CD4-positive, alpha-beta T cell (primary cell): ENCODE measurements at regions of chr14 and their contacts with region 1.

Region 1: GRCh38 chr14:99982537-99983250 is 82.5 kb upstream of the EVL start:
- DNase-seq: peak; percentile 33 to 86 (median 60)
- ATAC-seq: peak; percentile 100
- H3K4me3 ChIP-seq: no peak overlapping the region
- H3K4me3 Mint-ChIP-seq: no peak overlapping the region
- H3K27ac ChIP-seq: no peak overlapping the region
- H3K27ac Mint-ChIP-seq: peak overlapping the region; percentile 34
- H3K4me1 ChIP-seq: peaks cover 3% of the 10 kb centered on the region
- H3K4me1 Mint-ChIP-seq: peaks cover 23% of the 10 kb centered on the region
- H3K27me3 ChIP-seq: no peaks in the 10 kb centered on the region
- H3K27me3 Mint-ChIP-seq: no peaks in the 10 kb centered on the region
- CTCF ChIP-seq: peak; percentile 95

Region 2: DNA sequence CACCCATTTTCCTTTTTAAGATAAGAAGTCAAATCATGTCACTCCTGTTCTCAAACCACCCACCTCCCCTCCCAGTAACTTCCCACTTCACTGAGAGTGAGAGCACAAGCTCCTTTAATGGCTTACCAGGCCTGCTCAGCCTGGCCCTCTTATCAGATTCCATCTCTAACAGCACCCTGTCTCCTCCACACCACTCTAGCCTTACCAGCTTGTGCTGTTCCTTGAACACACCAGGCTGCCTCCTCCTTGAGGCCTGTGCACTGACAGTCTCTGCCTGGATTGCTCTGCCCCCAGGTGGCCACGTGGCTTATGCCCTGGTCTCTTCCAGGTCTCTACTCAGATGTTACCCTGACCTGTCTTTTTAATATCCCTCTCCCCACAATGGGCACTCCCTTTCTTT is 42.4 kb after region 1 on chr14:
- CTCF ChIA-PET with region 1: interaction called, 3 read pairs
- POLR2A ChIA-PET with region 1: no interaction called
- intact Hi-C with region 1: loop called in 1 of 2 experiments (anchors 1 kb)
- DNase-seq: peak in 9 of 14 experiments; percentile 4 to 43 (median 17)
- ATAC-seq: peak; percentile 64
- H3K4me3 ChIP-seq: no peak overlapping the region
- H3K4me3 Mint-ChIP-seq: no peak overlapping the region
- H3K27ac ChIP-seq: no peak overlapping the region
- H3K27ac Mint-ChIP-seq: no peak overlapping the region
- H3K4me1 ChIP-seq: peaks cover 3% of the 10 kb centered on the region
- H3K4me1 Mint-ChIP-seq: peaks cover 6% of the 10 kb centered on the region
- H3K27me3 ChIP-seq: no peaks in the 10 kb centered on the region
- H3K27me3 Mint-ChIP-seq: no peaks in the 10 kb centered on the region
- CTCF ChIP-seq: no peak

Region 3: GRCh38 chr14:100056964-100057795 is 74.5 kb after region 1 on chr14:
- CTCF ChIA-PET with region 1: no interaction called
- POLR2A ChIA-PET with region 1: interaction called, 3 read pairs
- intact Hi-C with region 1: loop called in 1 of 2 experiments (anchors 5 kb)
- DNase-seq: peak in 4 of 14 experiments; percentile 48 to 85 (median 78)
- ATAC-seq: peak; percentile 80
- H3K4me3 ChIP-seq: no peak overlapping the region
- H3K4me3 Mint-ChIP-seq: peak overlapping the region; percentile 8
- H3K27ac ChIP-seq: peak overlapping the region in 1 of 2 donors; percentile 39
- H3K27ac Mint-ChIP-seq: peak overlapping the region; percentile 78
- H3K4me1 ChIP-seq: peaks cover 48% of the 10 kb centered on the region
- H3K4me1 Mint-ChIP-seq: peaks cover 51% of the 10 kb centered on the region
- H3K27me3 ChIP-seq: no peaks in the 10 kb centered on the region
- H3K27me3 Mint-ChIP-seq: no peaks in the 10 kb centered on the region
- CTCF ChIP-seq: peak; percentile 81

Region 4: GRCh38 chr14:100108042-100108825 is 125.5 kb after region 1 on chr14:
- CTCF ChIA-PET with region 1: interaction called, 18 read pairs
- POLR2A ChIA-PET with region 1: no interaction called
- intact Hi-C with region 1: loop called (anchors 1 to 2 kb)
- DNase-seq: peak; percentile 80 to 92 (median 86)
- ATAC-seq: peak; percentile 45
- H3K4me3 ChIP-seq: no peak overlapping the region
- H3K4me3 Mint-ChIP-seq: peak overlapping the region; percentile 69
- H3K27ac ChIP-seq: peak overlapping the region; percentile 49 to 85
- H3K27ac Mint-ChIP-seq: peak overlapping the region; percentile 98
- H3K4me1 ChIP-seq: peaks cover 87% of the 10 kb centered on the region
- H3K4me1 Mint-ChIP-seq: peaks cover 80% of the 10 kb centered on the region
- H3K27me3 ChIP-seq: no peaks in the 10 kb centered on the region
- H3K27me3 Mint-ChIP-seq: no peaks in the 10 kb centered on the region
- CTCF ChIP-seq: peak; percentile 93

Region 5: GRCh38 chr14:100246826-100247428 is 264.2 kb after region 1 on chr14:
- CTCF ChIA-PET with region 1: no interaction called
- POLR2A ChIA-PET with region 1: interaction called, 3 read pairs
- intact Hi-C with region 1: loop called in 1 of 2 experiments (anchors 5 kb)
- DNase-seq: peak in 3 of 14 experiments; percentile 65 to 72 (median 69)
- ATAC-seq: peak; percentile 65
- H3K4me3 ChIP-seq: no peak overlapping the region
- H3K4me3 Mint-ChIP-seq: peak overlapping the region; percentile 6
- H3K27ac ChIP-seq: no peak overlapping the region
- H3K27ac Mint-ChIP-seq: peak overlapping the region; percentile 55
- H3K4me1 ChIP-seq: peaks cover 83% of the 10 kb centered on the region
- H3K4me1 Mint-ChIP-seq: peaks cover 75% of the 10 kb centered on the region
- H3K27me3 ChIP-seq: no peaks in the 10 kb centered on the region
- H3K27me3 Mint-ChIP-seq: no peaks in the 10 kb centered on the region
- CTCF ChIP-seq: peak; percentile 67